Endothelial cell of umbilical vein (primary cell): ENCODE measurements at regions of chr2 and their contacts with region 1.

Region 1: DNA sequence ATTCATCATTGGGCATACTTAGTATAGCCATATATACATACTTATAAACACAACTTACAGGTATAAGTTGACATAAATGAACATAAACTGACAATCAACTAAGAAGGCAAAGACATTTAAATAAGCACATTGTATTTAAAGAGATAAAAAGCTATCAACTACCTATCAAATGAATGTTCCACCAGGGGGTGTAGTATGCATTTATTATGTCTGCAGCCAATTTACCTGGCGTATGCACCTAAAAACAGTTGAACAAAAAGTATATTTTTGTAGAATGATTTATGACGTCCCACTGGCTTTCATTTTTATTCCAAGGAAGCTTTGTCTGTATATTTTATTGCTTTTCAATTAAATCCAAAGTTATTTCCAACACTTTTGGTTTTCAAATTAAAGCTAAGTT is 323.5 kb downstream of the AFF3 start:
- DNase-seq: peak; percentile 57
- H3K4me3 ChIP-seq: no peak overlapping the region
- H3K27ac ChIP-seq: no peak overlapping the region
- H3K4me1 ChIP-seq: peaks cover 3% of the 10 kb centered on the region
- H3K27me3 ChIP-seq: peaks cover 8 to 10% of the 10 kb centered on the region in 2 experiments
- CTCF ChIP-seq: peak; percentile 13 to 25
- POLR2A ChIP-seq: no peak

Region 2: DNA sequence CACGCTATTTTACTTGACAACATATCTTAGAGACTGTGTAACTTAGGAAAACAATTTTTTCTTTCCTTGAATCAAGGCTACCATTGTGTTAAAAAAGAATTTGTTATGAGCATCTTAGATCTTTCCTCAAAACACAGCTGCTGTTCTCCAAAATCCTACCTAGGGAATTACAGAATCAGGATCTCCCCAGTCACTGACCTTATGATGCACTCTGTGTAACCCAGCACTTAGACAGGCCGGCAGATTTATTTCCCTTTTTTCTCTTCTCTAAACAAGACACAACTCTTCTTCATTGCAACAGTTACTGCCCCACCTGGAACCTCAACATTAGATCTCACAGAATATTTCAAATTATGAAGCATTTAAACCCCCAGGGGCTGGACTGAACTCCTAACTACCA is 690.9 kb before region 1 on chr2:
- CTCF ChIA-PET with region 1: no interaction called
- POLR2A ChIA-PET with region 1: no interaction called
- dilution Hi-C with region 1: no loop called
- intact Hi-C with region 1: no loop called
- DNase-seq: no peak
- H3K4me3 ChIP-seq: no peak overlapping the region
- H3K27ac ChIP-seq: no peak overlapping the region
- H3K4me1 ChIP-seq: no peaks in the 10 kb centered on the region
- H3K27me3 ChIP-seq: no peaks in the 10 kb centered on the region
- CTCF ChIP-seq: no peak
- POLR2A ChIP-seq: no peak

Region 3: DNA sequence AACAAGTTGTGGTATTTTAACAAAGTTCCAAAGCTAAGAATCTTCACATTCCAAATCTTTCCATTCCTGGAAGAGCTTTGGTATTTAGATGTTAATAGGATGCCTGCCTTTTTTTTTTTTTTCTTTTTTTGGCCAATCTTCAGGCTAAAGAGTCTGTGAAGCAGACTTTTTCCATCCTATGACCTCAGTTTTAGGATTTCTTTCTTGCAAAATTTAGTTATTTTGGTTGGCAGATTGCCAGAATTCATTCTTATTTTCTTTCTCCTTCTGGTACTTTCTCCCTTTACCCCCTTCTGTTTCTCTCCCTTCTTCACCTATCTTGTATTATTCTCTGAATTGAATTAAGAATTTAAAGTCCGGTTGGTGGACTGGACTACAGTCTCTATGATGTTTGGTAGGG is 111.2 kb before region 1 on chr2:
- CTCF ChIA-PET with region 1: no interaction called
- POLR2A ChIA-PET with region 1: no interaction called
- dilution Hi-C with region 1: no loop called
- intact Hi-C with region 1: no loop called
- DNase-seq: no peak
- H3K4me3 ChIP-seq: no peak overlapping the region
- H3K27ac ChIP-seq: no peak overlapping the region
- H3K4me1 ChIP-seq: no peaks in the 10 kb centered on the region
- H3K27me3 ChIP-seq: no peaks in the 10 kb centered on the region
- CTCF ChIP-seq: no peak
- POLR2A ChIP-seq: no peak

Region 4: DNA sequence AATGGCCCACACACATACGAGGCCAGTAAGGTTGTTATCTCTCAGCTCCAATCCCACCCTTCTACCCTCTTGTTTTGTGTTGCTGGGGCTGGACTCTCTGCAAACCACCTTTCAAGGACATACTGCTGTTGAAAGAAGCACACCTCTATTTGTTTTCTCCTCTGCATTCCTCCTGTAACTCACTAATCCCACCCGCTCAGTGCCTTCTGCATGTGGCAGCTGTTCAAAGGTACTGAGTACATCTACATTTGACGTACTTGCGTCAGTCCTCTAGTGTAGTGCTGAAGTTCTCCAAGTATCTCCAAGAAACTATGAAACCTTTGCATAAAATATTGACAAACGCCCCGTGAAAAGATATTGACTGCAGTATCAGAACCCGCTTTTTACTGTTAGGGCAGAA is 12.9 kb after region 1 on chr2:
- CTCF ChIA-PET with region 1: interaction called, 17 read pairs
- POLR2A ChIA-PET with region 1: no interaction called
- dilution Hi-C with region 1: no loop called
- intact Hi-C with region 1: no loop called
- DNase-seq: no peak
- H3K4me3 ChIP-seq: no peak overlapping the region
- H3K27ac ChIP-seq: no peak overlapping the region
- H3K4me1 ChIP-seq: no peaks in the 10 kb centered on the region
- H3K27me3 ChIP-seq: peaks cover 5 to 7% of the 10 kb centered on the region in 2 experiments
- CTCF ChIP-seq: no peak
- POLR2A ChIP-seq: no peak

Region 5: DNA sequence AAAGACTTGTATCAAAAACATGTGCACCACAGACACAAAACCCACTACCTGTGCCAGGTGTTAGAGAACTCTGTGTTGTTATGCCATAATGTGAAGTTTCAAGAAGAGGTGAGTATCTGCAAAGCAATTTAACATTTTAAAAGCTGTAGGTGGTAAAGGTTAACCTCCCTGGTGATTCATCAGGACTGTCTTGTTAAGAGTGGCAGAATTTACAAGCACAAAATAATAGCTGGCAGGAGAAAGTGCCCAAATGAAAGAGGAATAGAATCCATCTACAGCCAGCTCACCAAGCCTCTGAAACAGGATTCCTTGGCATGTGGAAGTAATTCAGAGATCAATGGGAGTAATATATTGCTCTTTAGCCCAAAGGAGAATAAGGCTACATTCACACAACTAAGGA is 92.9 kb after region 1 on chr2:
- CTCF ChIA-PET with region 1: interaction called, 17 read pairs
- POLR2A ChIA-PET with region 1: no interaction called
- dilution Hi-C with region 1: no loop called
- intact Hi-C with region 1: no loop called
- DNase-seq: no peak
- H3K4me3 ChIP-seq: no peak overlapping the region
- H3K27ac ChIP-seq: no peak overlapping the region
- H3K4me1 ChIP-seq: no peaks in the 10 kb centered on the region
- H3K27me3 ChIP-seq: peaks cover 0 to 4% of the 10 kb centered on the region in 2 experiments
- CTCF ChIP-seq: no peak
- POLR2A ChIP-seq: no peak

Region 6: GRCh38 chr2:100041981-100042380 is 223.1 kb after region 1 on chr2:
- CTCF ChIA-PET with region 1: interaction called, 10 read pairs
- POLR2A ChIA-PET with region 1: interaction called, 3 read pairs
- dilution Hi-C with region 1: no loop called
- intact Hi-C with region 1: no loop called
- DNase-seq: no peak
- H3K4me3 ChIP-seq: no peak overlapping the region
- H3K27ac ChIP-seq: no peak overlapping the region
- H3K4me1 ChIP-seq: no peaks in the 10 kb centered on the region
- H3K27me3 ChIP-seq: no peaks in the 10 kb centered on the region
- CTCF ChIP-seq: no peak
- POLR2A ChIP-seq: no peak

Region 7: DNA sequence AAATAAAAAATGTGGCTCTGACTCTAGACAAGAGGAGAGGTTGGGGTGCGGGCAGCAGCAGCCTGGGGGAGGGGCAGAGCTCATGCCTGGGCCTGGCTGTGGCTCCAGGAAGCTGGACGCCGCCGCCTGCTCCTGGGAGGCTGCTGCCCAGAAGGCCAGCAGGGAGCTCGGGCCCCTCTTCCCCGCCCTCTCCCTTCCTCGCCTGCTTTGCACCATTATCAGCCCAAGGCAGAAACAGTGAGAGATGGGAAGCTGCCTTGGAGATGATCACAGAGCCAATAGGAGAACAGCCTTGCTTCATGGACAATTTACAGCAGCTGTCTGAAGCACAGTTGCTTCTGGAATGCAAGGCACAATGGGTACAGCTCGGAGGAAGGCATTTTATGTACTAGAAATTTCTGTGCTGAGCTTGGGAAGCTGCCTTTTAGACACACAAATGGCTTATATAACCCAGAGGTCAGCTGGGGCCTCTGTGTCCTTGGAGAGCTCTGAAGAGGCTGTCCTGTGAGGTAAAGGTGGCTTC is 378.9 kb after region 1 on chr2:
- CTCF ChIA-PET with region 1: interaction called, 10 read pairs
- POLR2A ChIA-PET with region 1: no interaction called
- dilution Hi-C with region 1: no loop called
- intact Hi-C with region 1: no loop called
- DNase-seq: peak; percentile 66
- H3K4me3 ChIP-seq: no peak overlapping the region
- H3K27ac ChIP-seq: peak overlapping the region; percentile 60
- H3K4me1 ChIP-seq: peaks cover 51% of the 10 kb centered on the region
- H3K27me3 ChIP-seq: no peaks in the 10 kb centered on the region
- CTCF ChIP-seq: no peak
- POLR2A ChIP-seq: no peak

Region 8: DNA sequence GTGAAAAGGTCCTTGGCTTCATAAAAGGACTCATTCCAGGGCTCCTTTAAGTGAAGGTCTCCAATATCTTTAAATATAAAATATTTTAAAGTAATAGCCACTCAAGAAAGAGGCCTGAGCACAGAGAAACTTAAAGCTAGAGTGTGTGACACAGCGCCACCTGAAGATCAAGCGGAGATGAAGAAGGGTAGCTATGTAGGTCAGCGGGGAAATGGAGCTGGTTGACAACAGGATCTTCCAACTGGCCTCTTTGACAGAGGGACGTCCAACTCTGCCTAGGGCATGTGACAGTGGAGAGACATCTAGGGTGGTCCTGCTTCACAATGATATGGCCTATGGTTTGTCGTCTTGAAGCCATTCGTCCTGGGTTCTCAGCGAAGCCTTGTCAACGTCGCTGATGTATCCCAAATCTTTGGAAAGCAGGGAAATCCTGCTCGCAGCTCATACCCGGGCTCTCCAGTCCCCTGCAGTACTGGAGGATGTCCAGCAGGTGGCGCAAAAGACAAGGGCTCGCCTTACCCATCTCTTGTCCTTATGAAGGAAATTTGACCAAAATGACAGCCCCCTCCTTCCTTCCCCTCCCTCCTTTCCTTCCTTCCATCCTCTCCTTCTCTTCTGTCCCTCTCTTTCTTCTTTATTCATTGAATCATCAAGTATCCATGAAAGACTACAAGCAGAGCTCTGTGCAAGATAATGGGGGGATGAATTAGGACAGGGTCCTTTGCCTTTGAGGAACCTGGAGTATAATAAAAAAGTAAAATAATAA is 443.9 kb after region 1 on chr2:
- CTCF ChIA-PET with region 1: interaction called, 86 read pairs
- POLR2A ChIA-PET with region 1: no interaction called
- dilution Hi-C with region 1: no loop called
- intact Hi-C with region 1: loop called (anchors 1 kb)
- DNase-seq: peak; percentile 56
- H3K4me3 ChIP-seq: no peak overlapping the region
- H3K27ac ChIP-seq: no peak overlapping the region
- H3K4me1 ChIP-seq: no peaks in the 10 kb centered on the region
- H3K27me3 ChIP-seq: no peaks in the 10 kb centered on the region
- CTCF ChIP-seq: peak; percentile 92 to 94
- POLR2A ChIP-seq: no peak